HCT116 (cell line): ENCODE measurements at regions of chr5 and their contacts with region 1.

Region 1: DNA sequence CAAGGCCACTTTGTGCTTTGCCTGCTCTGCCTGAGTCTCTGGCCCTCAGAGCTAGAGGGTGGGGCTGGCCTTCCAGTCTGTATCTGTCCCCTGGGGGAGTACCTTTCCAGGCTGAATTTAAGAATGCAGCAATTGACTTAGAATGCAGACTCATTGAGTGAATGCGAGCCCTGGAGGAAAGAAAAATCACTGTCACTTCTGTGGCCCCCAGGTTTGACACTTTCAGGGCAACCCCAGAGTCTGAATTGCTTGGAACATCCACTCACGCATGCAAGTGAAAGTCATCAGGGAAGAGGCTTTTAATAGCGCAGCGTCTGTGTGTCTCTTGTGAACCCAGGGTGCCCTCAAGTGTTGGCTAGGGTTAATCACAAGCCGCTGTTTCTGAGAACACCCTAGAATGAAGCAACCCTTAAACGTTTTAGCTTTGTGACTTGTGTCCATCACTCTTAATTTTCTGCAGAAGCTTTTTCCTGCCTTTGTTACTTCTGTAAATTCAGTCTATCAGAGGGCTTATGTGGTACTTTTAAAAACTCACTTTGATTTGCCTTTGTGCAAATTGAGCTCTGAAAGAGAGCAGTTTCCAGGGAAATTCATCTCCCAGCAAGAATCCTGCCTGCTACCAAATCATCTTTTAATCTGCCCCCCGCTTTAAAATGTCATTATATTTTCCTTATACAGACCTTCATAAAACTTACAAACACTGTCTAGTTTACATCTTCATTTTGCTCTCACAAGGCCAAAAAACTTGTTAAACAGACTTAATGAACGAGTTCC is 146.8 kb upstream of the IQGAP2 start:
- DNase-seq: peak; percentile 52
- ATAC-seq: peak; percentile 98
- H3K4me3 ChIP-seq: peak overlapping the region in 1 of 2 experiments; percentile 22; a peak in 1 of 4 replicates
- H3K27ac ChIP-seq: no peak overlapping the region
- H3K4me1 ChIP-seq: peaks cover 0 to 15% of the 10 kb centered on the region in 2 experiments; a peak in 2 of 4 replicates
- H3K27me3 ChIP-seq: no peaks in the 10 kb centered on the region
- CTCF ChIP-seq: peak; percentile 56 to 74 (median 59); a peak in 5 of 6 replicates
- POLR2A ChIP-seq: no peak
- RAD21 ChIP-seq: peak; percentile 89

Region 2: GRCh38 chr5:74673011-74673790 is 1583.1 kb before region 1 on chr5:
- CTCF ChIA-PET with region 1: no interaction called
- POLR2A ChIA-PET with region 1: no interaction called
- RAD21 ChIA-PET with region 1: no interaction called
- intact Hi-C with region 1: loop called (anchors 10 kb)
- DNase-seq: peak; percentile 24
- ATAC-seq: peak; percentile 80
- H3K4me3 ChIP-seq: no peak overlapping the region
- H3K27ac ChIP-seq: no peak overlapping the region
- H3K4me1 ChIP-seq: peaks cover 0 to 6% of the 10 kb centered on the region in 2 experiments; a peak in 2 of 4 replicates
- H3K27me3 ChIP-seq: no peaks in the 10 kb centered on the region
- CTCF ChIP-seq: peak; percentile 43 to 84 (median 49)
- POLR2A ChIP-seq: no peak
- RAD21 ChIP-seq: peak; percentile 87

Region 3: GRCh38 chr5:75053304-75054133 is 1202.8 kb before region 1 on chr5:
- CTCF ChIA-PET with region 1: no interaction called
- POLR2A ChIA-PET with region 1: no interaction called
- RAD21 ChIA-PET with region 1: no interaction called
- intact Hi-C with region 1: loop called (anchors 10 kb)
- DNase-seq: no peak
- ATAC-seq: peak; percentile 67
- H3K4me3 ChIP-seq: peak overlapping the region; percentile 56 to 67
- H3K27ac ChIP-seq: no peak overlapping the region
- H3K4me1 ChIP-seq: peaks cover 3 to 21% of the 10 kb centered on the region in 2 experiments; a peak in 3 of 4 replicates
- H3K27me3 ChIP-seq: no peaks in the 10 kb centered on the region
- CTCF ChIP-seq: 0 out of 6 replicates have a peak, but pooled peaks of 1 of the 3 experiments have one; percentile 4
- POLR2A ChIP-seq: no peak
- RAD21 ChIP-seq: peak; percentile 27; the same call in 1 of the 2 replicates

Region 4: DNA sequence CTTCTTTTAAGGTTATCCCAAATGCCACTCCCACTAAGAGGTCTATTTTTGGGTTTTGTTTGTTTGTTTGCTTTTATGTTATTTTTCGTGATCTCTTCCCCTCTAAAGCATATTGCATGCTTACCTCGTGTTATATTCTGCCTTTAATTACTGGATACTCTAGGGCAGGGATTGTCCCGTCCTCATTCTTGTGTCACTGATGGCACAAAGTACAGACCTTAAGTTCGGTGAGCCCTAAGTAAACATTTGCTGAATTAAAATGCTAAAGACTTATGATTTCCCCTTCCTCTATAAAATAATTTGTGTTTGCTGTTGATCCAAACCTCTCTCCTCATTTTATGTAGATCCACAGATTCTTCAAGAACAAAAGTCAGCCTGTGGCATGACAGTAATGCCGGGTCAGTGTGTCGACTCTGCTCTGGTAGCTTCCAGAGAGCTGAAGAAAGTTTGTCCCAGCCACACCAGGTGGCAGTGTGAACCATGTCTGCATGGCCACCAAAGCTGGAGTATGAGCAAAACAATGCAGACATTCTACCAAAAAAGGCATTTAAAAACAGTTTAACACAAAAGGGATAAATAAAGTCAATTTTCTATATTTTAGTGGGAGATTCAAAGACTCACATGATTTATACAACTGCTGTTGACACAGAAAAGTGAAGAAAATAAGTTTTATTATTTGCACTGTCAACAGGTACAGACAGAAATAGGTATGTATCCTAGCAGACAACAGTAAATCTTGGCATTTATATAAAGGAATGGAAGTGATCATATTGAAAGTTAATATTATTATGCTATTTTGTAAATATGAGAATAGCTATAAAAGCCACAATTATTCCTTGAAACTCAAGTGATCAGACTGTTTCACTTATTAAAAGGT is 521.2 kb before region 1 on chr5:
- CTCF ChIA-PET with region 1: interaction called, 5 read pairs
- POLR2A ChIA-PET with region 1: no interaction called
- RAD21 ChIA-PET with region 1: interaction called in 1 of 2 experiments, 3 read pairs
- intact Hi-C with region 1: loop called (anchors 1 kb)
- DNase-seq: peak; percentile 3
- ATAC-seq: peak; percentile 87
- H3K4me3 ChIP-seq: no peak overlapping the region
- H3K27ac ChIP-seq: no peak overlapping the region
- H3K4me1 ChIP-seq: no peaks in the 10 kb centered on the region
- H3K27me3 ChIP-seq: no peaks in the 10 kb centered on the region
- CTCF ChIP-seq: peak; percentile 26 to 67 (median 51); a peak in 5 of 6 replicates
- POLR2A ChIP-seq: no peak
- RAD21 ChIP-seq: peak; percentile 62

Region 5: GRCh38 chr5:76074487-76075065 is 181.7 kb before region 1 on chr5:
- CTCF ChIA-PET with region 1: interaction called, 5 read pairs
- POLR2A ChIA-PET with region 1: no interaction called
- RAD21 ChIA-PET with region 1: no interaction called
- intact Hi-C with region 1: loop called (anchors 1 kb)
- DNase-seq: no peak
- ATAC-seq: peak; percentile 78
- H3K4me3 ChIP-seq: no peak overlapping the region
- H3K27ac ChIP-seq: no peak overlapping the region
- H3K4me1 ChIP-seq: no peaks in the 10 kb centered on the region
- H3K27me3 ChIP-seq: peaks cover 29% of the 10 kb centered on the region
- CTCF ChIP-seq: peak; percentile 33 to 75 (median 67); a peak in 5 of 6 replicates
- POLR2A ChIP-seq: no peak
- RAD21 ChIP-seq: peak; percentile 59

Region 6: DNA sequence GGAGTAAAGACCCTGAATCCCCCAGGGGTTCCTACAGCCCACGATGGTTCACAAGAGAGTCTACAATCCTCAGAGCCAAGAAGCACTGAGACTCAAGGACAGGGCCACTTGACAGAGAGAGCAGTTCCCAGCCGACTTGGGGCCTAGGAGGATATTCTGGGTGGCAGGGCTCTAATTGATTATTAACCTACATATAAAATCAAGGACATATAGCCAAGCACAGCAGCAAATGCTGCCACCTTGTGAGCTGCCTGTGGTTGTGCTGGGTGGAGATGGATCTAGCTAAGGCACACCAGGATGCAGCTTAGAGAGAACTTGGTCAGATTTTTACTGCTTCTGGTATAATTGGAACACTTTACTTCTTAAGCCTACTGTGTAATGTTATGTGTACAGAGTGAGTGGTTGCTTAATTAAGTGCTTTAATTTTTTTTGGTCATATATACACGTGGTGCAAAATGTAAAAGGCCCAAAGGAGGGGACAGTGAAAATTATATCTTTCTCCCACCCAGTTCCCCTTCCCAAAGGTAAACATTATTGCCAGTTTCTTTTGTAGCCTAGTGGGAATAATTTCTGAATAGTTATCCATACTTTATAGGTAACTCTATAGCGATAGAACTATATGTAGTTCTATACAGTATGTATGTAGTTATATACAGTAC is 288.1 kb after region 1 on chr5:
- CTCF ChIA-PET with region 1: interaction called, 8 read pairs
- POLR2A ChIA-PET with region 1: no interaction called
- RAD21 ChIA-PET with region 1: no interaction called
- intact Hi-C with region 1: loop called (anchors 5 kb)
- DNase-seq: peak; percentile 31
- ATAC-seq: peak; percentile 95
- H3K4me3 ChIP-seq: no peak overlapping the region
- H3K27ac ChIP-seq: no peak overlapping the region
- H3K4me1 ChIP-seq: no peaks in the 10 kb centered on the region
- H3K27me3 ChIP-seq: no peaks in the 10 kb centered on the region
- CTCF ChIP-seq: peak; percentile 63 to 65 (median 64); a peak in 5 of 6 replicates
- POLR2A ChIP-seq: no peak
- RAD21 ChIP-seq: peak; percentile 73